ENCODE measurements at regions of chr2 and their contacts with region 1.

Region 1: DNA sequence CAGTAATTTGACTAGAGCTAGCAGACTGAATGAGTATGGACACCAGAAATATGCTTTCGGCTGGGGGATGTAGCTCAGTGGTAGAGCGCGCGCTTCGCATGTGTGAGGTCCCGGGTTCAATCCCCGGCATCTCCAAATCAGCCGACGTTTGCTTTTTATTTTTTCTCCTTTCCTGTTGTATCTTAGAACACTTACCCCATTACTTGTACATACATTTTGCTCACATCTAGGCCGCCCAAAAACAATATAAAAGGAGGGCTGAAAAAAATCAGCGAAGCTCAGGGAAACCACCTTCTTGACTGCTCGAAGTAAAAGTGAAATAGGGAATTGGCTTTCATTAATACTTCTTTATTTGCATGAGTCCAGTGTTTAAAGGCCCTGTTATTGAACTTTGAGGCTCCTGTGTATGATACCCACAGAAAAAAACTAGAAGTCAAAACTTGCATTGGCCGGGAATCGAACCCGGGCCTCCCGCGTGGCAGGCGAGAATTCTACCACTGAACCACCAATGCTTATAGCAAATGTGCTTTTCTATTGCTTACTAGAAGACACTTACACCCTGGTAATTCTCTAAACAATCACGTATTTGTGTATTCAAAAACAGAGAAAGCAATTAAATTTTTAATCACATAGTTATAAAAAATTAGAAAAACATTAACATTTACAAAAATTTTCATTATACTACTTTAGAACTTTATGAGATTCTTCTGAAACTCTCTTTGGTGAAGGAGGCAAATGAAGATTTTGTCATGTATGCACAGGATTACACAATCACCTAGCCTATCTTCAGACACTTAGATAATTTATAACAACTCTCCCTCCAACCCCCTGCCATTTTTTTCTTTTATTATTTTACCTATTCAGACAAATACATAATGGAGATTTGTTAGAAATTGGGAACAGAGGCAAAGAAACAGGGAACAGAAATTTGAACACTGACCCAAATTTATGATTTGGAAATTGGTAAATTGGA is 35.2 kb upstream of the GPD2 start:
- DNase-seq: peak; percentile 75 to 83 (median 78)
- H3K4me3 ChIP-seq: peak overlapping the region; percentile 81 to 98 (median 93)
- H3K4me3 Mint-ChIP-seq: peak overlapping the region; percentile 87 to 90
- H3K27ac ChIP-seq: peak overlapping the region; percentile 67 to 86
- H3K27ac Mint-ChIP-seq: peak overlapping the region; percentile 92 to 99 (median 97)
- H3K4me1 ChIP-seq: peaks cover 57 to 61% of the 10 kb centered on the region in 2 donors
- H3K4me1 Mint-ChIP-seq: peaks cover 57% of the 10 kb centered on the region
- H3K27me3 ChIP-seq: no peaks in the 10 kb centered on the region
- H3K27me3 Mint-ChIP-seq: no peaks in the 10 kb centered on the region
- CTCF ChIP-seq: no peak

Region 2: DNA sequence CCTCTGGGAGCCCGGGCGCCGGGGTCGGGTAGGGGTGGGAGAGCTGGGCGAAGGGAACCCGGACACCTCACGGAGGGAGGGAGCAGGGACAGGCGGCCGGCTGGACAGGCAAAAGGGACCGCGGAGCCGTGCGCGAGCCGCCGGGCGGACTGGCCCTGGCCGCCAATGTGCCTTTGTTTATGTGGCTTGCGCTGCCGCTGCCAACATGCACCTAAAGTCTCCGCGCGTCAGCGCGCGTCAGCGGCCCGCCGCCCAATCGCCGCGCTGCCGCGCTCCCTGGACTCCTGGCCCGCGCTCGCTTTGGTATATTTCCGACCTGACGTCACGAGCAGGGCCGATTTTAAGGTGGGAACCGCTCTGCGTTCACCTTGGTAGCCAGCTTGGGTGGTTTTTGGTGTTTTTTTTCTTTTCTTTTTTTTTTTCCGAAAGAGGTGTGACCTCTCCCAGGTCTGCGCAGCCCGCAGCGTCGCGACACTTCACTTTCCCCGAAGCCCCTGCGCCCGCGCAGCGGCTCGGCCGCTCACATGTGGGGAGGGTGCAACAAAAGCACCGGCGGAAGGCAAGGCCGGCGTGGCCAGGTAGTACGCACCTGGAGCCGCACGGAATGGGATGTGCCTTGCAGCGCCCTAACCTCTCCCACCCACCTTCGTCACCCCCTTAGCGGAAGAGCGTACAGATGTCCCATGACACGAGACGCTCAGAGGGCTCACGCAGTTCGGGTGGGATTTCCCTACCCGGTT is 68.3 kb before region 1 on chr2 and contains the start of gene NR4A2:
- intact Hi-C with region 1: loop called (anchors 5 kb)
- DNase-seq: peak; percentile 90 to 96 (median 91)
- H3K4me3 ChIP-seq: peak within 1 kb of the TSS; percentile 57 to 92 (median 81)
- H3K4me3 Mint-ChIP-seq: peak within 1 kb of the TSS; percentile 96 to 97
- H3K27ac ChIP-seq: peak within 1 kb of the TSS; percentile 92 to 97
- H3K27ac Mint-ChIP-seq: peak within 1 kb of the TSS; percentile 97 to 99 (median 98)
- H3K4me1 ChIP-seq: peaks cover 59 to 66% of the 10 kb centered on the region in 2 donors
- H3K4me1 Mint-ChIP-seq: peaks cover 51% of the 10 kb centered on the region
- H3K27me3 ChIP-seq: peaks cover 32 to 35% of the 10 kb centered on the region in 2 donors
- H3K27me3 Mint-ChIP-seq: peaks cover 36 to 45% (median 42%) of the 10 kb centered on the region in 3 donors
- CTCF ChIP-seq: no peak
- polyA plus RNA-seq, gene NR4A2: 12.1 to 213 (median 21.6) TPM

Region 3: DNA sequence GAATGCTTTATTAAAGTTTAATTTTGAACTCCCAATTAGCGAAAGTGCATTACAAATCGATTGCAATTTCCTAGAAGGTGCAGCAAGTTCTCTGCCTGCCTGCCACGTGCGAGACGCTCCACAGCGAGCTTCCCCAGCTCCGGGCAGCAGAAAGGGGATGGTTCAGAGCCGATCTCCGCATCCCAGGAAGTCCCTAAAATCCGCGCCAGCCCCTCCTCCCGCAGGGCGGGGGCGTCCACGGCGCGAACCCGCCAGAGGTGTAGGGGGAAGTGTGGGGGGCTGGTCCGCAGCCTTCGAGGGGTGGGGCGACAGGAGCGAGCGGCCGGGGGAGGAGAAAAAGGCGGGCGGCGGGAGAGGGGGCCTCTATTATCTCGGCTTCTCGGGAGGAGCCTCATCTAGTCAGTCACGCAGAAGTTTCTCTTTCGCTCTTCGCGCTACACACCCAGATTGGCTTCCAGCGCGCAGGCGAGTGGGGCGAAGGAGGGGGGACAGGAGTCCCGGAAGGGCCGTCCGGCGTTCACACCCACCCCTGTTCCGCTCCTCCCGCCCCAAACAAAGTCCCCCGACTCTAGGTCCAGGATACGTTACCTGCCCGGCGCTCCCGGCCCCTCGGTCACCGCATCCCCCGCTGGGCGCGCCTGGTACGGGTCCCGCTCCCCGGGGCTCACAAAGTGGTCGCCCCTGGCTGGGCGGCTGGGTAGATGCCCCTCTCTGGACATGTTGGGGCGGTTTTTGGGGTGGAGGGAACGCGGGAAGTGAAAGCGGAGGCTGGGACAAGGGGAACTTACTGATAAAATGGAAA is 59.3 kb before region 1 on chr2:
- intact Hi-C with region 1: loop called (anchors 2 kb)
- DNase-seq: peak; percentile 86 to 91 (median 89)
- H3K4me3 ChIP-seq: peak overlapping the region; percentile 86 to 91 (median 87)
- H3K4me3 Mint-ChIP-seq: peak overlapping the region; percentile 91 to 92
- H3K27ac ChIP-seq: peak overlapping the region; percentile 99
- H3K27ac Mint-ChIP-seq: peak overlapping the region; percentile 97 to 99 (median 99)
- H3K4me1 ChIP-seq: peaks cover 25 to 31% of the 10 kb centered on the region in 2 donors
- H3K4me1 Mint-ChIP-seq: peaks cover 37% of the 10 kb centered on the region
- H3K27me3 ChIP-seq: no peaks in the 10 kb centered on the region
- H3K27me3 Mint-ChIP-seq: peaks cover 0 to 4% (median 1%) of the 10 kb centered on the region in 3 donors
- CTCF ChIP-seq: no peak

Region 4: DNA sequence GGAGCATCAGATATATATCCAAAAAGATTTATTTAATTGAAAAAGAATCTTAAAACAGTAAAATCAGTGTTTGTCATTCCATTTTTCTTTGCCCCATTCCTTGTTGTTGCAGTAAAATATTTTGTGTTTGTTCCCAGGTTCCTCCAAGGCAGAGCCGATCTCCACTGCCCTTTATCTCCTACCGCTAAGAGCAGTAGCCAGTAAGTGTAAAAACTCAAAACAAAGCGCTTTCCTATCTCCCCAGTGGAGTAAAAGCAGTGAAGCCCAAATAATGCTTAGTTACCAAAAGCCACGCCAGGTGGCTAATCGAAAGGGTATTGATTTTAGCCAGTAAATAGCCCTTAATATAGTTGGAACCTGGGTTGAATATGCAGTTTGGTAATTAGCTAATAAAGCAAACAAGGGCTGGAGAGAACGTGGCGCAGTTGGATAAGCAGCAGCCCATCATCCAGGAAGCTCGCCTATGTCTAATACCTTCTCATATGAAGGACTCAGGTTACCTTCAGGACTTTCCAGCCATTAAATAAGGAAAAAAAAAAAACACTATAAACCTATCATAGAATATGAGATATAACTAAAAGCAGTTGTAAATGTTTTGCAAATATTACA is 22.8 kb after region 1 on chr2:
- intact Hi-C with region 1: no loop called
- DNase-seq: no peak
- H3K4me3 ChIP-seq: no peak overlapping the region
- H3K4me3 Mint-ChIP-seq: no peak overlapping the region
- H3K27ac ChIP-seq: no peak overlapping the region
- H3K27ac Mint-ChIP-seq: no peak overlapping the region
- H3K4me1 ChIP-seq: peaks cover 3 to 5% of the 10 kb centered on the region in 2 donors
- H3K4me1 Mint-ChIP-seq: peaks cover 5% of the 10 kb centered on the region
- H3K27me3 ChIP-seq: no peaks in the 10 kb centered on the region
- H3K27me3 Mint-ChIP-seq: peaks cover 0 to 5% (median 1%) of the 10 kb centered on the region in 3 donors
- CTCF ChIP-seq: no peak

Region 5: DNA sequence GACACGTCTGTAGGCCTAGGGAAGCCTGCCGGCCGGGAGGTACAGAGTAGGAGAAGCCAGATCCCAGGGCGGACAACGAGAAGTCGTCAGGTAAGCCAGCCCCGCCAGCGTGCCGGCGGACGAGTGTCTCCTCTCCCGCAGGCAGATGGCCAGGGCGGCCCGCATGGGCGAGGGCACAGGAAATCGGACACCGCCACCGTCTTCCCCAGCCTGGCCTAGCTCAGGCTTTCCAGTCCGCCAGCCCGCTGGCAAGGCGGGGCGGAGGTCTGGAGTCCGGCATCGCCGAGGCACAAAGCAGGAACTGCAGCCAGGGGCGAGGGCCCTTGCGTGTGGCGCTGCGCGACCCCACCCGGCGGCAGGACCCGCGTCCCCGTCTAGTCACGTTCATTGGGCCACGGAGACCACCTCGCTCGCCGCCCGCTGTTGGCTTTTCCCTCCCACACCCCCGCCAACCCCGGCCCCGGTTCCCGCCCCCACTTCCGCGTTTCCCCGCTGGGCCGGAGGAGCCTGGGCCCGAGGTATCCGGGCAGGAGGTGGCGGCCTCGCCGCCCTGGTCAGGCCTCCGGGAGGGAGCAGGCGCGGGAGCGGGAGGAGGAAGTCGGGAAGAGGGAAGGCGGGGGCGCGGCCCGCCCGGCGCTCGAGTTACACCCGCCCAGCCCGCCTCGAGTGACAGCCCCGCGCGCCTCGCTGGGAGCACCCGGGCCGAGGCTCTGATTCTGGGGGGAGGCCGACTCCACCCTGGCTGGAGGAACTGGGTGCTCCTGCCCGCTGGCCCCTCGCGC is 34.9 kb after region 1 on chr2 and contains the start of gene GPD2:
- intact Hi-C with region 1: loop called (anchors 2 to 5 kb)
- DNase-seq: peak; percentile 79 to 82 (median 81)
- H3K4me3 ChIP-seq: peak within 1 kb of the TSS; percentile 50 to 91 (median 90)
- H3K4me3 Mint-ChIP-seq: peak within 1 kb of the TSS; percentile 94 to 95
- H3K27ac ChIP-seq: peak within 1 kb of the TSS; percentile 89 to 98
- H3K27ac Mint-ChIP-seq: peak within 1 kb of the TSS; percentile 95 to 99 (median 98)
- H3K4me1 ChIP-seq: peaks cover 37 to 57% of the 10 kb centered on the region in 2 donors
- H3K4me1 Mint-ChIP-seq: peaks cover 55% of the 10 kb centered on the region
- H3K27me3 ChIP-seq: no peaks in the 10 kb centered on the region
- H3K27me3 Mint-ChIP-seq: no peaks in the 10 kb centered on the region
- CTCF ChIP-seq: no peak
- polyA plus RNA-seq, gene GPD2: 13.4 to 17.1 (median 14.5) TPM